Endothelial cell of umbilical vein (primary cell): ENCODE measurements at regions of chr9 and their contacts with region 1.

Region 1: GRCh38 chr9:121107041-121107440 is 32.3 kb downstream of the CNTRL start:
- DNase-seq: no peak
- H3K4me3 ChIP-seq: no peak overlapping the region
- H3K27ac ChIP-seq: no peak overlapping the region
- H3K4me1 ChIP-seq: no peaks in the 10 kb centered on the region
- H3K27me3 ChIP-seq: no peaks in the 10 kb centered on the region
- CTCF ChIP-seq: no peak
- POLR2A ChIP-seq: no peak

Region 2: DNA sequence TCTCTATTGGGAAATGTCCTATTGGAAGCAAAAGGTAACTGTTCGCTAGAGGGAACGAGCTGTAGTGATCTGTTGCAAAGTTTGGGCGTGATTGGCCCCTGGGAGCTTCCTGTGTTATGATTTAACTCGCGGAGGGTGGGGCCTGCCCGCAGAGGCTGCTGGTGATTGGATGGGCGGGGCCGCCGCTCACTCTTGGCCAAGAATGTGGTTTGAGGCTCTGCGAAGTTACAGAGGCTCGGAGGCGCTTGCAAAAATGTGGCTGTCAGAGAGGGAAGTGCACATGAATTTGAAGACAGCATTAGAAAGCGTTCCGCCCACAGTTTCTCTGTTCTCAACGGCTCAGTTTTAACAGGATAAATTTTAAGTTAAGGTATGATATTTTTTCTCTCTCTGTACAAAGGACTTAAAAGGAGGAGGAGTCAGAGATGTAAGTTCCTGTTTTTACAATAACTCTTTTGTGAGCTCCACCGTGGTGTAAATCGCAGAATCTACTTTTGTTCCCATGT is 14.6 kb after region 1 on chr9:
- CTCF ChIA-PET with region 1: interaction called, 11 read pairs
- POLR2A ChIA-PET with region 1: no interaction called
- dilution Hi-C with region 1: no loop called
- intact Hi-C with region 1: no loop called
- DNase-seq: peak; percentile 98
- H3K4me3 ChIP-seq: peak overlapping the region; percentile 38 to 93 (median 79)
- H3K27ac ChIP-seq: peak overlapping the region; percentile 59
- H3K4me1 ChIP-seq: peaks cover 11% of the 10 kb centered on the region
- H3K27me3 ChIP-seq: no peaks in the 10 kb centered on the region
- CTCF ChIP-seq: no peak
- POLR2A ChIP-seq: peak; percentile 65